Activated B cell treated with CpG ODN at 0.5 μM for 24 hours (primary cell): ENCODE measurements at regions of chr10 and their contacts with region 1.

Region 1: DNA sequence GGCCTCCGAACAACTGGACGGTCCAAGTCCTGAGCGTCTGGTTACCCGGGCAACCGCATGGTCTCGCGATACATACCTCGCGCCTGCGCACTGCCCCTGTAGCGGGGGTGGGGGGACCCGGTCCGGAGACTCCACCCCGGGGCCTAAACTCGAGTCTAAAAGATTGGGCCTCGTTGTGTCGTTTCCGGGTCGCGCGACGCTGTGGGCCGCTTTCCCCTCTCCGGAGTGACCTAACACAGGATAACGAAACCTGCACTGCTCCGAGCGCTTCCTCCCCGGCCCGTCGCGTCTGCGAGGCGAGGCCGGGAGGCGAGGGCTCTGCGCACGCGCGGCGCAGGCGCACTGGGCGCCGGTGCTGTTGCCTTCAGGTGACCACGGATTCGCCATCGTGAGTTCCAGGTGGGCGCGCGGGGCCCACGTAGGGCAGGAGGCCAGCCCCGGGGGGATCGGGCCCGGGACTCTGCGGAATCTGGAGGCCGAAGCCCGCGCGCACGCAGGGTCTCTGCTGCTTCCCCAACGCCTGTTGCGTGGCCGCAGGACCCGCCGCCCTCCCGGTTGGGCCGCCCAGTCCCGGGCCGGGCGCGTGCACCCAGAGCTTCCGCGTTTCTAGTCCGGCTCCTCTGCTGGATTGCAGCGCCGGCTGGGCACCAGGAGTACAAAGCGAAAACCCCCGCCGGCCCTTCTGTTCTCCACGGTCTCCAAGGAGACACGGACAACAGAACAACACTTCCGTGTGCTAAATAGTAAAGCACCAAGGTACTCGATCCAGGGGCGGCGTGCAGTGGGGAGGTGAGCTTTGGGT is at the start of gene RPP38:
- DNase-seq: peak; percentile 97
- ATAC-seq: peak; percentile 83
- H3K4me3 Mint-ChIP-seq: peak within 1 kb of the TSS; percentile 96
- H3K27ac Mint-ChIP-seq: peak within 1 kb of the TSS; percentile 93
- H3K4me1 Mint-ChIP-seq: peaks cover 29% of the 10 kb centered on the region
- H3K27me3 Mint-ChIP-seq: no peaks in the 10 kb centered on the region
- CTCF ChIP-seq: no peak
- total RNA-seq, gene RPP38: 21.2 and 27.9 TPM in 2 replicates

Region 2: DNA sequence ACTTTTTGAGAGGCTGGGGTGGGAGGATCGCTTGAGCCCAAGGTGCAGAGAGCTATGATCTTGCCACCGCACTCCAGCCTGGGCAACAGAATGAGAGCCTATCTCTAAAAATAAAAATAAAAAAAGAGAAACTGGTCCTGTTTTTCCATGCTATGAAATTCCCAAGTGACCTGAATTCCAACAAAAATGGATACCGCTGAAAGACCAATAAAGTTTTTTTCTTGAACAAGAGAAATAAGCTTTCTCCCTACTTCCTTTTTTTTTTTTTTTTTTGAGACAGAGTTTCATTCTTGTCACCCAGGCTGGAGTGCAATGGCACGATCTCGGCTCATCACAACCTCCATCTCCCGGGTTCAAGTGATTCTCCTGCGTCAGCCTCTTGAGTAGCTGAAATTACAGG is 1736.6 kb before region 1 on chr10:
- CTCF ChIA-PET with region 1: no interaction called
- POLR2A ChIA-PET with region 1: no interaction called
- intact Hi-C with region 1: loop called (anchors 5 kb)
- DNase-seq: no peak
- ATAC-seq: no peak
- H3K4me3 Mint-ChIP-seq: no peak overlapping the region
- H3K27ac Mint-ChIP-seq: no peak overlapping the region
- H3K4me1 Mint-ChIP-seq: no peaks in the 10 kb centered on the region
- H3K27me3 Mint-ChIP-seq: peaks cover 8% of the 10 kb centered on the region
- CTCF ChIP-seq: no peak

Region 3: GRCh38 chr10:14185316-14186045 is 911.7 kb before region 1 on chr10:
- CTCF ChIA-PET with region 1: no interaction called
- POLR2A ChIA-PET with region 1: interaction called, 5 read pairs
- intact Hi-C with region 1: loop called (anchors 5 kb)
- DNase-seq: peak; percentile 23
- ATAC-seq: peak; percentile 86
- H3K4me3 Mint-ChIP-seq: peak overlapping the region; percentile 64
- H3K27ac Mint-ChIP-seq: peak overlapping the region; percentile 88
- H3K4me1 Mint-ChIP-seq: peaks cover 37% of the 10 kb centered on the region
- H3K27me3 Mint-ChIP-seq: peaks cover 15% of the 10 kb centered on the region
- CTCF ChIP-seq: no peak

Region 4: GRCh38 chr10:14751014-14751896 is 346.0 kb before region 1 on chr10:
- CTCF ChIA-PET with region 1: no interaction called
- POLR2A ChIA-PET with region 1: no interaction called
- intact Hi-C with region 1: loop called (anchors 5 kb)
- DNase-seq: peak; percentile 60
- ATAC-seq: peak; percentile 78
- H3K4me3 Mint-ChIP-seq: peak overlapping the region; percentile 70
- H3K27ac Mint-ChIP-seq: peak overlapping the region; percentile 97
- H3K4me1 Mint-ChIP-seq: peaks cover 71% of the 10 kb centered on the region
- H3K27me3 Mint-ChIP-seq: no peaks in the 10 kb centered on the region
- CTCF ChIP-seq: no peak

Region 5: DNA sequence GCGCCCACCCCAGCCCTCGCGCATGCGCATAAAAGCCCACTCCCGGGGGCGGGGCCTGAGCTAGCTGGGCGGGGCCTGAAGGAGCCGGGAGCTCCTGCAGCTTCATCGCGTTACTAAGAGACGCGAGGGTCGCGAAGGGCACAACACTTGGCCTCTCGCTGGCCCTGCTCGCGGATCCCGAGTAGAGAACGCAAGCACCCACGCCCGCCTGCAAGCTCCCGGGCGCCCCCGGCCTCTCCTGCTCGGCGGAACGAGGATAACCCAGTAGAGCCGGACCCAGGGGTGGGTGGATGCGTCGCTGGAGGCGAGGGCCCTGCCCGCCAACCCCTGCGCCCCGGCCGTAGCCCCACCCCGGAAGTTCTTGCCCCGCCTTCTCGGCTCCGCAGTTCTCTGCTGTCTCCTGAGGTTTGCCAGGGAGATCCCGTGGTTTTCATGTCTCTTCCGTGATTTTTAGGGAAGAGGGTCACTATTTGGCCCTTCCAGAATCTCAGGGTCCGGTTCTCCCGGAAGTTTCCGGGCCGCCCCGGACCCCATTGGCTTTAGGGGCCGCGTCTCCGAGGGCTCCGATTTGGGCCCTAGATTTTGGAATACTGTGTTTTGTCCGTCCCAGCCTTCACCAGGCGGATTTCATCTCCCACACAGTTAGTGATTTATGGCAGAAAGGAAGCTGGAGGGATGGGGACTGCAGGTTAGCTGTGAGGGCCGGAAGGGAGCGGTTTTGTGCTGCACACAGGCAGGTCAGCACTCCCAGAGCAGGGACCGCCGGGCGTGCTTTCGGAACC is 137.7 kb before region 1 on chr10 and contains the start of gene MEIG1:
- CTCF ChIA-PET with region 1: no interaction called
- POLR2A ChIA-PET with region 1: no interaction called
- intact Hi-C with region 1: loop called (anchors 1 kb)
- DNase-seq: peak; percentile 100
- ATAC-seq: peak; percentile 83
- H3K4me3 Mint-ChIP-seq: peak within 1 kb of the TSS; percentile 97
- H3K27ac Mint-ChIP-seq: peak within 1 kb of the TSS; percentile 98
- H3K4me1 Mint-ChIP-seq: peaks cover 14% of the 10 kb centered on the region
- H3K27me3 Mint-ChIP-seq: no peaks in the 10 kb centered on the region
- CTCF ChIP-seq: no peak
- total RNA-seq, gene MEIG1: 0.49 and 0.54 TPM in 2 replicates

Region 6: GRCh38 chr10:15141136-15142054 is 44.2 kb after region 1 on chr10:
- CTCF ChIA-PET with region 1: no interaction called
- POLR2A ChIA-PET with region 1: interaction called, 4 read pairs
- intact Hi-C with region 1: loop called (anchors 1 kb)
- DNase-seq: peak; percentile 32
- ATAC-seq: peak; percentile 94
- H3K4me3 Mint-ChIP-seq: peak overlapping the region; percentile 74
- H3K27ac Mint-ChIP-seq: peak overlapping the region; percentile 69
- H3K4me1 Mint-ChIP-seq: peaks cover 40% of the 10 kb centered on the region
- H3K27me3 Mint-ChIP-seq: no peaks in the 10 kb centered on the region
- CTCF ChIP-seq: no peak